GM12878 (cell line): ENCODE measurements at regions of chr4 and their contacts with region 1.

Region 1: DNA sequence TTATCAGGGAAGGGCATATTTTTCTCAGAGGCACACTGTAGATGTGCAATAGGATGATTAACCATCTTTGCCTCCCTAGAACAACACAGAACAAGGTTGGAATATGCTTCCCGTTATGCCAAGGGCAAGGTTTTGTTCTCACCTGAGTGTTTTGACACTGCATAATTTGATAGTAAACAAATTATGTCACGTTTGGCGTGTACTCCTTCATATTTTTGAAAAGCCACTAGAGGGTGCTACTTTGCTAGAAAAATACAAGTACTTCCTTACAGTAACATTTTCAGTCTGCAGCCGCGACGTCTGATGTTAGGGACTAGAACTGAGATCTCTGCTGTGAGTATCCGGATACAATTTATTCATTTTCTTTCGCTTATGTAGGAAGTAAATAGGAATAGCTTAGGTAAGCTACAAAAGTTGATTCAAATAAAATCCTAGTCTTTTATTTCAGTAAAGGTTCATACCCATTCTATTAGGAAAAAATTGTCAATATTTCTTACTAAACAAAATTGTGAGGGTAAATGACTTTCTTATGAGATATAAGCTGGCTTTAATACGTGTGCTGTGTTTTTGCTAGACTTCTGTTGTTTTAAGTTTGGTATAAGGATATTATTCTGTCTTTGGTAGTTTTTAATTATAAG is 181.1 kb upstream of the WDFY3 start:
- DNase-seq: peak; percentile 11
- ATAC-seq: peak; percentile 93
- H3K4me3 ChIP-seq: no peak overlapping the region
- H3K27ac ChIP-seq: no peak overlapping the region
- H3K4me1 ChIP-seq: no peaks in the 10 kb centered on the region
- H3K27me3 ChIP-seq: no peaks in the 10 kb centered on the region
- CTCF ChIP-seq: peak; percentile 51 to 67 (median 53); a peak in 5 of 6 replicates
- EP300 ChIP-seq: no peak
- POLR2A ChIP-seq: no peak
- RAD21 ChIP-seq: peak; percentile 63

Region 2: DNA sequence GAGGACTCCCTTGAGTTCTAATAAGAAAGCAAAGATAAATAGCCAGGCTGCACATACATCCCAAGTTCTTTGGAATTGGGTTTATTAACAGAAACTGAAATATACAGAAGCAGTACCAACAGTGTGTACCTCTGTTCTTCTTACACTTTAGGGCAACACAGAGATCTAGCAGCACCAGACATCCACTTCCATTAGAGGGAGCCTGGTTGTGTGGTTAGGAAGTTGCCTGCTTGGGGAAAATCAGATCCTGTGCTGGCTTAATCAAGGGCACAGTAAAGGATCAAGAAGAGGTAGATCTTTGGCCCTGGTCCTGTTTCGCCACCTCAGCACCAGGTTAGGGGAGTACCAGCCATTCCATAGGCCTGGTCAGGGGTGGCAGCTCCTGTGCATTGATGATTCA is 96.3 kb after region 1 on chr4:
- CTCF ChIA-PET with region 1: no interaction called
- POLR2A ChIA-PET with region 1: no interaction called
- RAD21 ChIA-PET with region 1: no interaction called
- SMC1A ChIA-PET with region 1: no interaction called
- in situ Hi-C with region 1: no loop called
- intact Hi-C with region 1: loop called (anchors 5 kb)
- DNase-seq: no peak
- ATAC-seq: no peak
- H3K4me3 ChIP-seq: no peak overlapping the region
- H3K27ac ChIP-seq: no peak overlapping the region
- H3K4me1 ChIP-seq: no peaks in the 10 kb centered on the region
- H3K27me3 ChIP-seq: no peaks in the 10 kb centered on the region
- CTCF ChIP-seq: no peak
- EP300 ChIP-seq: no peak
- POLR2A ChIP-seq: no peak
- RAD21 ChIP-seq: no peak

Region 3: GRCh38 chr4:85370430-85371032 is 223.0 kb after region 1 on chr4:
- CTCF ChIA-PET with region 1: interaction called, 14 read pairs
- POLR2A ChIA-PET with region 1: no interaction called
- RAD21 ChIA-PET with region 1: interaction called, 3 read pairs
- SMC1A ChIA-PET with region 1: interaction called, 8 read pairs
- in situ Hi-C with region 1: loop called (anchors 5 kb)
- intact Hi-C with region 1: loop called (anchors 1 kb)
- DNase-seq: peak; percentile 11
- ATAC-seq: peak; percentile 99
- H3K4me3 ChIP-seq: no peak overlapping the region
- H3K27ac ChIP-seq: no peak overlapping the region
- H3K4me1 ChIP-seq: no peaks in the 10 kb centered on the region
- H3K27me3 ChIP-seq: no peaks in the 10 kb centered on the region
- CTCF ChIP-seq: peak; percentile 61 to 82 (median 68)
- EP300 ChIP-seq: no peak
- POLR2A ChIP-seq: no peak
- RAD21 ChIP-seq: peak; percentile 59

Region 4: DNA sequence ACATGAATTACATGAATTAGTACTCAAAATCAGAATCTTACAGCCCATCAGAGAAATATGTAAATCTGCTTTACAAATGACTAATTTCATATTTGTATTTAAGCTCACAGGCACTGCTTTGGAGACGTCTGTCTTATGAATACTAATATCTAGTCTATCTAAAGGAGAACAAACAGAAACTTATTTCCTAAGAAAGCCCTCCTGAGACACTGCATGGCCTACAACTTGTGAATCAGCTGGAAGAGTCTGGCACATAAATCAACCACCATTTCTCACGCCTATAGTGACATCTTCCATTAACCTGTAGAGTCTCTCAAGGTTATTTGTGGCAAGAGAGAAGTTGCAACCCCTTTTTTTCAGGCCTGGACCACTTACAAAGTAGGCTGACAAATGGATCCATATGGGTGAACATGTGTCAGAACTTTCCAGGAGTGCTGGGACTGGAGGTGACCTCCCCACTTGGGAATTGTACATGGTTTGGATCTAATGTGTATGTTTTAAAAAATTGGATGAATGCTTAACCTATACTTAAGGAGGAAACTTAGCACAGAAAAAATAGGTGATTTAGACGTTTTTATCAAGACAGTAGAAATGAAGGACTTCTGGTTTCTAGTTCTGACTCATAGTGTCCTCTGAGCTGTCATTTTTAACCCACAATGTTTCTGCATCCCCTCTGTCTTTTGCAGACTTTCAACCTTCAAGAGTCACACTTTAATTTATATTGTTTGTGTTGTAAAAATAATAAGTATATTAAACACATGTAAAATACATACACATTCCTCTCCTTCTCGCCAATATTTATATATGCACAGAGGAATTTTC is 244.2 kb after region 1 on chr4:
- CTCF ChIA-PET with region 1: no interaction called
- POLR2A ChIA-PET with region 1: no interaction called
- RAD21 ChIA-PET with region 1: no interaction called
- SMC1A ChIA-PET with region 1: no interaction called
- in situ Hi-C with region 1: no loop called
- intact Hi-C with region 1: no loop called
- DNase-seq: peak; percentile 12
- ATAC-seq: peak; percentile 81
- H3K4me3 ChIP-seq: no peak overlapping the region
- H3K27ac ChIP-seq: no peak overlapping the region
- H3K4me1 ChIP-seq: peaks cover 20% of the 10 kb centered on the region
- H3K27me3 ChIP-seq: no peaks in the 10 kb centered on the region
- CTCF ChIP-seq: no peak
- EP300 ChIP-seq: peak in 1 of 2 experiments; percentile 31; a peak in 1 of 4 replicates
- POLR2A ChIP-seq: no peak
- RAD21 ChIP-seq: no peak